ENCODE measurements at regions of chr5 and their contacts with region 1.

Region 1: GRCh38 chr5:122500245-122501075 is 188.4 kb downstream of the SNCAIP start:
- DNase-seq: peak in 2 of 9 experiments; percentile 2 to 4
- ATAC-seq: no peak
- H3K4me3 ChIP-seq: no peak overlapping the region
- H3K4me3 Mint-ChIP-seq: no peak overlapping the region
- H3K27ac ChIP-seq: no peak overlapping the region
- H3K27ac Mint-ChIP-seq: no peak overlapping the region
- H3K4me1 ChIP-seq: no peaks in the 10 kb centered on the region
- H3K4me1 Mint-ChIP-seq: no peaks in the 10 kb centered on the region
- H3K27me3 ChIP-seq: no peaks in the 10 kb centered on the region
- H3K27me3 Mint-ChIP-seq: no peaks in the 10 kb centered on the region
- CTCF ChIP-seq: no peak

Region 2: DNA sequence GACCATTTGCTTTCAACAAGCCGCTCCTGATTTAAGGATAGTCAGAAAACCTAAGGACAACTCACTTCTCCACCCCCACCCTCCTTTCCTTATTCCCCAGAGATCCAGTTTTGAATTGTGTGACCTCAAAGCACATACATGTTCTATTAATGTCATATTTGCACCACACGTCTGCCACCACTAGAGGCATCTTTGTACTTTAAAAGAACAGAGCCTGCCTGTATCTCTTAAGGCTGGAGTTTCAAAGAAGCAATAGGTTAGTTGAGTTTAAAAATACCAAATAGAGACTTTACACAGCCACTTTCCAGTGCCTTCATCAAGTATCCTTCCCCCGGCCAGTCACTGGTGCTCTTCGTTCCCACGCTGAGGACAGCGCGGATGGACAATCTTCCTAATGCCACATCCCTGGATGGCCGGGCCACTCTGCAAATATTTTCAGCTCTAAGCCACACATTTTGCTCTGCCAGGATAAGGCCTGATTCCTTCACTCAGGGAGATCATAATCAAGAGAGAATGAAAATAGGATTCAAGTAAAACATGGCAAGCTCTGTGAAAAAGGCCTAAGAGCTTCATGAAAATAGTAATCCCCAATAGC is 42.1 kb before region 1 on chr5:
- CTCF ChIA-PET with region 1: no interaction called
- POLR2A ChIA-PET with region 1: no interaction called
- intact Hi-C with region 1: no loop called
- DNase-seq: no peak
- ATAC-seq: no peak
- H3K4me3 ChIP-seq: no peak overlapping the region
- H3K4me3 Mint-ChIP-seq: no peak overlapping the region
- H3K27ac ChIP-seq: no peak overlapping the region
- H3K27ac Mint-ChIP-seq: no peak overlapping the region
- H3K4me1 ChIP-seq: no peaks in the 10 kb centered on the region
- H3K4me1 Mint-ChIP-seq: no peaks in the 10 kb centered on the region
- H3K27me3 ChIP-seq: no peaks in the 10 kb centered on the region
- H3K27me3 Mint-ChIP-seq: no peaks in the 10 kb centered on the region
- CTCF ChIP-seq: no peak

Region 3: GRCh38 chr5:122487721-122488120 is 12.7 kb before region 1 on chr5:
- CTCF ChIA-PET with region 1: no interaction called
- POLR2A ChIA-PET with region 1: no interaction called
- intact Hi-C with region 1: no loop called
- DNase-seq: no peak
- ATAC-seq: no peak
- H3K4me3 ChIP-seq: no peak overlapping the region
- H3K4me3 Mint-ChIP-seq: no peak overlapping the region
- H3K27ac ChIP-seq: no peak overlapping the region
- H3K27ac Mint-ChIP-seq: no peak overlapping the region
- H3K4me1 ChIP-seq: no peaks in the 10 kb centered on the region
- H3K4me1 Mint-ChIP-seq: no peaks in the 10 kb centered on the region
- H3K27me3 ChIP-seq: no peaks in the 10 kb centered on the region
- H3K27me3 Mint-ChIP-seq: peaks cover 2% of the 10 kb centered on the region
- CTCF ChIP-seq: no peak

Region 4: GRCh38 chr5:123605822-123606221 is 1105.4 kb after region 1 on chr5:
- CTCF ChIA-PET with region 1: no interaction called
- POLR2A ChIA-PET with region 1: no interaction called
- intact Hi-C with region 1: loop called in 1 of 2 experiments (anchors 10 kb)
- DNase-seq: no peak
- ATAC-seq: no peak
- H3K4me3 ChIP-seq: no peak overlapping the region
- H3K4me3 Mint-ChIP-seq: no peak overlapping the region
- H3K27ac ChIP-seq: no peak overlapping the region
- H3K27ac Mint-ChIP-seq: no peak overlapping the region
- H3K4me1 ChIP-seq: no peaks in the 10 kb centered on the region
- H3K4me1 Mint-ChIP-seq: peaks cover 3% of the 10 kb centered on the region
- H3K27me3 ChIP-seq: no peaks in the 10 kb centered on the region
- H3K27me3 Mint-ChIP-seq: no peaks in the 10 kb centered on the region
- CTCF ChIP-seq: no peak